Naive thymus-derived CD4-positive, alpha-beta T cell (primary cell): ENCODE measurements at regions of chrX and their contacts with region 1.

Region 1: DNA sequence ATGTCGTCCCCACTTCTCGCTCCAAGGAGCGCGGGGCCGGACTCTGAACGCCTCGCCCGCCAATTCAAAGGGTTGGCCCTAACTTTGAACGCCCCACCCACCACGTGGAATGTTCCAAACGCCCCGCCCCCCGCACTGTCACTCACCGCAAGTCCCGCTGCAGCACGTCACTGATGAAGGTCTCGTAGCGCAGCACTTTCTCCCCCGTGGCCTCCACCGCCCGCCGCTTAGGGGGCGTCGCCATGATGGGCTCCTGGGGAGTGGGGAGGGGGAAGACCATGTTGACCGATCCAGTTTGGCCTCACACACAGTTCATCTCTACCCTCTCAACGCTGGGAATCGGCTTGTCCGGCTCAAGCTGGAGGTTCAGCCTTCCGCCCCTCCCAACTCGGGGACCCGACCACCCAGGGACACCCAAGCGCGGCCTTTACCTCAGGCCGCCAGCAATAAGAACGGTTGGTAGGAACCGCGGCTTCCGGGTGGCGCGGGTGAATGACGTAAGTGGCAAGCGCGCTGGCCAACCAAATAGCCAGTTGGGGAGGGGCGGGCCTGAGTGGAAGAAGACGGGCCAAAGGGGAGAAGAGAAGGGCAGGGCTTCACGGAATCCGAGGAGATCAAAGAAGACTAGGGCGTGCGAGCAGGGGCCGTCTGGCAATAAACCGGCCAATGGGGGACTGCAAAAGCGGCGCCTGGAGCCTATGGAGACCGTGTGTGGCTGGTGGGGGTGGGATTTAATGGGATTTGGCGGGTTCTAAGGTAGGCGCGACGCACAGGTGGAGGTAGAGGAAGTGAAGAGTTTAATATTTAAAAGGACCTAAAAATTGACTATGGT is at the start of gene UXT:
- DNase-seq: peak; percentile 75 to 92 (median 89)
- ATAC-seq: peak; percentile 91
- H3K4me3 ChIP-seq: peak within 1 kb of the TSS; percentile 86
- H3K4me3 Mint-ChIP-seq: peak within 1 kb of the TSS; percentile 80 to 95 (median 92)
- H3K27ac ChIP-seq: peak within 1 kb of the TSS; percentile 99
- H3K27ac Mint-ChIP-seq: peak within 1 kb of the TSS; percentile 94 to 99 (median 97)
- H3K4me1 ChIP-seq: peaks cover 4 to 8% of the 10 kb centered on the region in 2 donors
- H3K4me1 Mint-ChIP-seq: peaks cover 9 to 34% (median 21%) of the 10 kb centered on the region in 7 donors
- H3K27me3 ChIP-seq: no peaks in the 10 kb centered on the region
- H3K27me3 Mint-ChIP-seq: no peaks in the 10 kb centered on the region
- total RNA-seq, gene UXT: 160 to 235 (median 201) TPM

Region 2: DNA sequence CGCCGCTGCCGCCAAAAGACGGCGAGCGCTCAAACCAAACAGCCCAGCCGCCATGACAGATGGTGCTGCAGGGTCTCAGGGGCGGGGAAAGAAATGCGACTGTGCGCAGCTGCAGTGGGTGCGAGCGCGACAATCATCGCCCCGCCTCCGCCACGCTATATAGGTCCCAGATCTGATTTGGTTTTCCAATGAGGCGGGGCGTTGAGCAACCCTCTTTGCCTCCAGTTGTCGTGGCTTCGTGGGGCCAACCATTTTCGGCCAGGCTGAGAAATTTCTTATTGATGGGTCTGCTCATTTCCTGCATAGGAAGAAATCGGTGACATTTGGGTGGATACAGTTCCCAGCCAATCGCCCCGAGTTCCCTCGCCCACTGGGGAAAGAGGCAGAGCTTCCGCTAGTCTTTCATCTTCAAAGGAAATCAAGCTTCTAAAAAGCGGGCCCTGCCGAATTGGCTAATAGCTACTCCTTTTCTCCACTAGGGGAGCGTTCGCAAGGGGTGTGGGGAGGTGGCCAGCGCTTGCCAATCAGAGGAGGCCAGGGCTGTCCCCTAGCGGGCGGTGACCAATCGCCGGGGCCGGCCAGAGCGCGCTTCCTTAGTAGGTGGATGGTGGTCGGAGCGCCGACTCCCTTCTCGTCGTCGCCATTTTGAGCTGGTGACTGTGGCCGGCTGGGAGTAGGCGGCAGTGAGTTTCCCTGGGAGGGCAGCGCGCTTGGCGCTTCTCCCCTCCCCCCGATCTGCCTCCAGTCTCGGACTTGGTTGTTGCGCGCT is 514.1 kb before region 1 on chrX and contains the starts of genes NDUFB11 and RBM10:
- CTCF ChIA-PET with region 1: no interaction called
- POLR2A ChIA-PET with region 1: no interaction called
- intact Hi-C with region 1: loop called (anchors 1 to 2 kb)
- DNase-seq: peak; percentile 64 to 90 (median 87)
- ATAC-seq: peak; percentile 95
- H3K4me3 ChIP-seq: peak within 1 kb of the TSS; percentile 77
- H3K4me3 Mint-ChIP-seq: peak within 1 kb of the TSS; percentile 92 to 99 (median 96)
- H3K27ac ChIP-seq: peak within 1 kb of the TSS; percentile 94
- H3K27ac Mint-ChIP-seq: peak within 1 kb of the TSS; percentile 93 to 99 (median 96)
- H3K4me1 ChIP-seq: peaks cover 6 to 12% of the 10 kb centered on the region in 2 donors
- H3K4me1 Mint-ChIP-seq: peaks cover 6 to 42% (median 26%) of the 10 kb centered on the region in 7 donors
- H3K27me3 ChIP-seq: no peaks in the 10 kb centered on the region
- H3K27me3 Mint-ChIP-seq: no peaks in the 10 kb centered on the region
- total RNA-seq, gene NDUFB11: 51.3 to 92.5 (median 55.2) TPM
- total RNA-seq, gene RBM10: 31.8 to 55.6 (median 47.6) TPM

Region 3: GRCh38 chrX:47482512-47483309 is 176.2 kb before region 1 on chrX and contains the start of gene ZNF41:
- CTCF ChIA-PET with region 1: no interaction called
- POLR2A ChIA-PET with region 1: no interaction called
- intact Hi-C with region 1: loop called (anchors 1 to 2 kb)
- DNase-seq: peak; percentile 48 to 84 (median 76)
- ATAC-seq: peak; percentile 95
- H3K4me3 ChIP-seq: peak within 1 kb of the TSS; percentile 85
- H3K4me3 Mint-ChIP-seq: peak within 1 kb of the TSS; percentile 81 to 97 (median 90)
- H3K27ac ChIP-seq: peak within 1 kb of the TSS; percentile 88
- H3K27ac Mint-ChIP-seq: peak within 1 kb of the TSS; percentile 82 to 98 (median 96)
- H3K4me1 ChIP-seq: peaks cover 9 to 22% of the 10 kb centered on the region in 2 donors
- H3K4me1 Mint-ChIP-seq: peaks cover 22 to 50% (median 37%) of the 10 kb centered on the region in 7 donors
- H3K27me3 ChIP-seq: no peaks in the 10 kb centered on the region
- H3K27me3 Mint-ChIP-seq: no peaks in the 10 kb centered on the region
- total RNA-seq, gene ZNF41: 7.5 to 17.8 (median 14.7) TPM

Region 4: GRCh38 chrX:47776292-47777006 is 117.5 kb after region 1 on chrX:
- CTCF ChIA-PET with region 1: no interaction called
- POLR2A ChIA-PET with region 1: no interaction called
- intact Hi-C with region 1: no loop called
- DNase-seq: no peak
- ATAC-seq: no peak
- H3K4me3 ChIP-seq: no peak overlapping the region
- H3K4me3 Mint-ChIP-seq: no peak overlapping the region
- H3K27ac ChIP-seq: no peak overlapping the region
- H3K27ac Mint-ChIP-seq: no peak overlapping the region
- H3K4me1 ChIP-seq: no peaks in the 10 kb centered on the region
- H3K4me1 Mint-ChIP-seq: no peaks in the 10 kb centered on the region
- H3K27me3 ChIP-seq: no peaks in the 10 kb centered on the region
- H3K27me3 Mint-ChIP-seq: peaks cover 0 to 4% (median 0%) of the 10 kb centered on the region in 5 donors

Region 5: GRCh38 chrX:47836164-47837072 is 177.5 kb after region 1 on chrX and contains the start of gene ZNF81:
- CTCF ChIA-PET with region 1: no interaction called
- POLR2A ChIA-PET with region 1: no interaction called
- intact Hi-C with region 1: loop called (anchors 1 kb)
- DNase-seq: peak; percentile 73 to 91 (median 83)
- ATAC-seq: peak; percentile 96
- H3K4me3 ChIP-seq: peak within 1 kb of the TSS; percentile 67
- H3K4me3 Mint-ChIP-seq: peak within 1 kb of the TSS; percentile 96 to 99 (median 98)
- H3K27ac ChIP-seq: peak within 1 kb of the TSS; percentile 79
- H3K27ac Mint-ChIP-seq: peak within 1 kb of the TSS; percentile 94 to 99 (median 97)
- H3K4me1 ChIP-seq: peaks cover 4 to 6% of the 10 kb centered on the region in 2 donors
- H3K4me1 Mint-ChIP-seq: peaks cover 1 to 36% (median 26%) of the 10 kb centered on the region in 7 donors
- H3K27me3 ChIP-seq: no peaks in the 10 kb centered on the region
- H3K27me3 Mint-ChIP-seq: no peaks in the 10 kb centered on the region
- total RNA-seq, gene ZNF81: 11.0 to 14.7 (median 11.7) TPM

Region 6: DNA sequence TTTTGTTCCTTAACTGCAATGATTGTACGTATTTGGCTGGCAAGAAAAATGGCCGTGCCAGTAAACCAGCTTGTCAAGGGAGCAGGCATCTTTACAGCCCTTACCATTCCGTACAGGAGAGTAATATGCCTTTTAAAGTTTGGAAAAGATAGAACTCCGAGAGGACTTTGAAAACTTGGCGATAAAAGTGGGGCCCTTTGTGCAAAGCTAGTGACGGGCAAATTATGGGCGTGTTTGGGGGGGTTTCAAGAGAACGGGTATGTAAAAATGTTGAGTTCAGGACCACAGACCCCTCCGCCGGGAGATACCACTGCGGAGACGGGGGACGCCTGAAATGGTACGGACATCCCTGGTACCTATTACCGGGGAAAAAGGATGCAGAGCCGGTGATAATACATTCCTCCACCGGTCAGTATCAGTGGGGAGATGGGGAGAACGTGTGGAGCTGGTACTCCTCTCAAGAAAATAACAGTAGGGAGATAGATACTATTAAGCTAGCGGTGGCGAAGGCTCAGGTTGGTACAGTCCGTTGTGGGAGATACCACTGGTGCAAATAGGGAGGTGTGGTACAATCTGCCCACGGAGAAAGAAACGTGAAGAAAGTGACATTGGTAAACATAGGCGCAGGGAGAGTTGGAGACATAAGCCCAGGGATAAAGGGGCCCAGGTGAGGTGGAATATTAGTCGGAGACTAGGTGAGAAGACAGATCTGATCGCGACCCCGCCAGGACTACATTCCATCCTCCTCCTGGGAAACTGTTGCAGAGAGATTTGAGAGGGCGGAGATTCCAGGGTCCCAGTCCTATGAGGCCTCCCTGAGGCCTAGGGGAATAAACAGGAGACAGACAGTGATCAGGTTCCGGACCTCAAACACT is 362.4 kb after region 1 on chrX:
- CTCF ChIA-PET with region 1: no interaction called
- POLR2A ChIA-PET with region 1: no interaction called
- intact Hi-C with region 1: loop called in 1 of 2 experiments (anchors 2 kb)
- DNase-seq: peak; percentile 57 to 90 (median 87)
- ATAC-seq: peak; percentile 77
- H3K4me3 ChIP-seq: peak overlapping the region; percentile 96
- H3K4me3 Mint-ChIP-seq: peak overlapping the region; percentile 91 to 97 (median 94)
- H3K27ac ChIP-seq: peak overlapping the region; percentile 87
- H3K27ac Mint-ChIP-seq: peak overlapping the region; percentile 93 to 99 (median 98)
- H3K4me1 ChIP-seq: no peaks in the 10 kb centered on the region
- H3K4me1 Mint-ChIP-seq: peaks cover 6 to 29% (median 10%) of the 10 kb centered on the region in 7 donors
- H3K27me3 ChIP-seq: no peaks in the 10 kb centered on the region
- H3K27me3 Mint-ChIP-seq: peaks cover 0 to 6% (median 0%) of the 10 kb centered on the region in 5 donors

Region 7: DNA sequence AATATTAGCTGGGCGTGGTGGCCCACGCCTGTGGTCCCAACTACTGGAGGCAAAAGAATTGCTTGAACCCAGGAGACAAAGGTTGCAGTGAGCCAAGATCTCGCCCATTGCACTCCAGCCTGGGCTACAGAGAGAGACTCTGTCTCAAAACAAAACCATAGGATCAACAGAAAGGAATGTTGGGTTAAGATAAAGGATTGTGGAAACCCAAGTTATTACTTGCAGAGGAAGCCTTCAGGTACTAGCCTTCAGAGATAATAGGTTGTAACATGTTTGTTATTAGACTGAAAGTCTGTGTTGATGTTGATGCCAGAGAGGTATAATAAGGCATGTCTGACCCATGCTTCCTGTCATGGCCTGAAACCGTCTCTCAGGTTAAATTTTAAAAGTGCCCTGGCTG is 520.8 kb after region 1 on chrX:
- CTCF ChIA-PET with region 1: no interaction called
- POLR2A ChIA-PET with region 1: no interaction called
- intact Hi-C with region 1: no loop called
- DNase-seq: no peak
- ATAC-seq: no peak
- H3K4me3 ChIP-seq: no peak overlapping the region
- H3K4me3 Mint-ChIP-seq: no peak overlapping the region
- H3K27ac ChIP-seq: no peak overlapping the region
- H3K27ac Mint-ChIP-seq: no peak overlapping the region
- H3K4me1 ChIP-seq: no peaks in the 10 kb centered on the region
- H3K4me1 Mint-ChIP-seq: no peaks in the 10 kb centered on the region
- H3K27me3 ChIP-seq: no peaks in the 10 kb centered on the region
- H3K27me3 Mint-ChIP-seq: peaks cover 0 to 2% (median 0%) of the 10 kb centered on the region in 5 donors